Prostate gland (tissue), 2 donors: ENCODE measurements at regions of chr9 and their contacts with region 1.

Region 1: GRCh38 chr9:14353222-14354056 is 39.5 kb upstream of the NFIB start:
- DNase-seq: peak; percentile 94
- H3K4me3 ChIP-seq: no peak overlapping the region
- H3K27ac ChIP-seq: peak overlapping the region; percentile 81 to 83
- H3K4me1 ChIP-seq: no peaks in the 10 kb centered on the region
- H3K27me3 ChIP-seq: no peaks in the 10 kb centered on the region
- CTCF ChIP-seq: peak; percentile 77 to 95 (median 94)
- POLR2A ChIP-seq: no peak

Region 2: DNA sequence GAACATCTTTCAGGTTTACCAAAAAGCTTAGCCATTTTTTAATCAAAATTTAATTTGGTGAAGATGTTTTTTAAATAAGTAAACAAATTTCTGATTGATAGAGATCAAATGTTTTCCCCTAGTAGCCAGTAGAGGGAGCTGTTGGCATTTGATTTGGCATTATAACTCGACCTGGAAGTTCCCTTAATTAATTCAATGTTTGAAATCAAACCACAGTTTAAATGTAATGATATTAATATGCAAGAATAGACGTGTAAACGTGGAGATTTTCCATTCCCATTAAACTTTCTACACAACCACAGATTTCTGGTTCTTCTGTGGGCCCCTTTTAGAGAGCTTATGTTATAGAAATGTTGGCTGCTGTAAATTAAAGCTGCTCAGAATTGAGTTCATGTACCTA is 925.9 kb before region 1 on chr9:
- intact Hi-C with region 1: loop called (anchors 5 kb)
- DNase-seq: peak; percentile 45
- H3K4me3 ChIP-seq: no peak overlapping the region
- H3K27ac ChIP-seq: no peak overlapping the region
- H3K4me1 ChIP-seq: no peaks in the 10 kb centered on the region
- H3K27me3 ChIP-seq: no peaks in the 10 kb centered on the region
- CTCF ChIP-seq: peak; percentile 50 to 88 (median 80)
- POLR2A ChIP-seq: no peak

Region 3: DNA sequence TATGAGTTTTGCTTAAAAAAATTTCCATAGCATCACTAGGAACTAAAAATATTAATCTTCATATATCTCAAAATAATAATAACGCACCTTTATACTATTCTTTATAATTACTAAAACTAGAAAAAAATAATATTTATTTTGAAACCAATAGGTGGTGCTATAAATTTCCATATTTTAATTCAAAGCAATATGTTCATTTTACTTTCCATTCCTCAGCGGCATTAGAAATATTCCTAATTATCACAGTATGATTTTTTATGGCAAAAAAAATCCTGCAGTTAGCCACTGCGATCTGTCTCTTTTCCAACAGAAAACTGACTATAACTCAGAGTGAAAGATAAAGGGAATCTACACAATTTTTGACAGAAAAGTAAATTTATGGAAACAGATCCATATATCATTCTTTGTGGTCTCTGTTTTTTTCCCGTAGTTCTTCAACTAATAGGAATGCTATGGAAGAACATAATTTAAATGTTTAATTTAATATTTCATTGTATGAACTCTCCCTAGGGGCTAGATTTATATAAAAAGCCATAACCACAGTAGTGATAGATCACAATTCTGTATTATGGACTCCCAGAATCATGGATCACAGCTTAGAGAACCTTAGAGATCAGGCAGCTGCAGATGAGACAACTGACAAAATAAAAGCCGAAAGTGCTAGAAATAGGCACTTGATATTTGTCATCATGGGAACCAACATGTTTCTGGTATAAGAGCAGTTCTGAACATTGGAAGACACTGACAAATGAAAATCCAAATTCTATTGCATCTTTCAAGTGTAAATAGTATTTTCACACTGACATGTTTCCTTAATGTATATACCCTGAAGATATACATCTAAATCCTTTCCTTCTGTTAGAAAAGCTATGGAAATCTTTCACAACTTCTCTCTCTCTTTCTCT is 906.2 kb before region 1 on chr9:
- intact Hi-C with region 1: loop called (anchors 5 kb)
- DNase-seq: no peak
- H3K4me3 ChIP-seq: no peak overlapping the region
- H3K27ac ChIP-seq: no peak overlapping the region
- H3K4me1 ChIP-seq: no peaks in the 10 kb centered on the region
- H3K27me3 ChIP-seq: no peaks in the 10 kb centered on the region
- CTCF ChIP-seq: peak in 2 of 4 experiments; percentile 10 to 19
- POLR2A ChIP-seq: no peak

Region 4: DNA sequence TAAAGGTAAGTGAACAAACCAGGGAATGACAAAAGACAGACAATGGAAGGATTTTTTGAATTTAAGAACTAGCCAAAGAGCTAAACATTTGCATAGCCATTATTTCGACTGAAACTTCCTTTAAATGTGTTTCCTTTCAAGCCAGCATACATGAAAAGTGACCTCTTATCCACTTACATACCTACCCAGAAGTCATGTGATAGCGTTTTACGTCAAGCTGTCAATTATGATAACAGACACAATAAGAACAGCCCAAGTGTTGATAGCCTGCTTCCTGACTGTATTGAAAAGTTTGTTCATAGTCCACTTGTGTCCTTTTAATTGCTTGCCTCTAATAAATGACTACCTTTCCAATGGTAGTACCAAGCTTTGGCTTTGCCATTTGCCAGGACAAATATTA is 245.5 kb before region 1 on chr9:
- intact Hi-C with region 1: no loop called
- DNase-seq: no peak
- H3K4me3 ChIP-seq: no peak overlapping the region
- H3K27ac ChIP-seq: peak overlapping the region; percentile 21 to 73
- H3K4me1 ChIP-seq: no peaks in the 10 kb centered on the region
- H3K27me3 ChIP-seq: no peaks in the 10 kb centered on the region
- CTCF ChIP-seq: no peak
- POLR2A ChIP-seq: no peak

Region 5: DNA sequence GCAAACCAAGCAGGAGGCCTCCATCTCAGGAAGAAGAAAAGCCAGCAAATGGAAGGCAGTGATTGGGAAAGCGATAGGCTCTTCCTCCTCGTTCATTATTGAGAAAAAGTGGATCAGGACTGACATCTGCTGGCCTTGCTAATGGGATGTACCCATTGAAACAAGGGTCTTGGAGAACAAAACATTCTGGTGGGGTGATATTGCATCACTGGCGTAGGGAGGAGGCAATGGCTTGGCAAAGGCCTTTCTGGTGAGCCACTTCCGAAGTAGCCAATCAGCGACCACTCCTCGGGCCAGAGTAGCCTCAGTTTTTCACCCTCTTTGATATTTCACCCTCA is 47.2 kb after region 1 on chr9:
- intact Hi-C with region 1: loop called (anchors 5 kb)
- DNase-seq: no peak
- H3K4me3 ChIP-seq: no peak overlapping the region
- H3K27ac ChIP-seq: no peak overlapping the region
- H3K4me1 ChIP-seq: peaks cover 2% of the 10 kb centered on the region
- H3K27me3 ChIP-seq: no peaks in the 10 kb centered on the region
- CTCF ChIP-seq: peak in 2 of 4 experiments; percentile 21 to 52
- POLR2A ChIP-seq: no peak

Region 6: DNA sequence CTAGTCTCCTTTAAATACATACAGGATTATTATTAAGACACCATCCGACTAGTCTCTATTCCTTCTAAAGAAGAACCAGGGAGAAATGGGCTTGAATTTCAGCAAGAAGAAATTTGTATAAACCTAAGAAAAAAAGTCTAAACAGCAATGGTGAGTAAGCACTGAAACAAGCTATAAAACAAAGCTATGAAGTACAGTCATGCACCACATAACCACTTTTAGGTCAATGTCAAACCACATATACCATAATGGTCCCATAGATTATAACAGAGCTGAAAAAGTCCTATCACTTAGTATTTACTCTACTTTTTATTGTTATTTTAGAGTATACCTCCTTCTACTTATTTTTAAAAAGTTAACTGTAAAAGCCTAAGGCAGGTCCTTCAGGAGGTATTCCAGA is 62.5 kb after region 1 on chr9:
- intact Hi-C with region 1: no loop called
- DNase-seq: no peak
- H3K4me3 ChIP-seq: no peak overlapping the region
- H3K27ac ChIP-seq: no peak overlapping the region
- H3K4me1 ChIP-seq: no peaks in the 10 kb centered on the region
- H3K27me3 ChIP-seq: no peaks in the 10 kb centered on the region
- CTCF ChIP-seq: no peak
- POLR2A ChIP-seq: no peak